ENCODE measurements at regions of chr9 and their contacts with region 1.

Region 1: DNA sequence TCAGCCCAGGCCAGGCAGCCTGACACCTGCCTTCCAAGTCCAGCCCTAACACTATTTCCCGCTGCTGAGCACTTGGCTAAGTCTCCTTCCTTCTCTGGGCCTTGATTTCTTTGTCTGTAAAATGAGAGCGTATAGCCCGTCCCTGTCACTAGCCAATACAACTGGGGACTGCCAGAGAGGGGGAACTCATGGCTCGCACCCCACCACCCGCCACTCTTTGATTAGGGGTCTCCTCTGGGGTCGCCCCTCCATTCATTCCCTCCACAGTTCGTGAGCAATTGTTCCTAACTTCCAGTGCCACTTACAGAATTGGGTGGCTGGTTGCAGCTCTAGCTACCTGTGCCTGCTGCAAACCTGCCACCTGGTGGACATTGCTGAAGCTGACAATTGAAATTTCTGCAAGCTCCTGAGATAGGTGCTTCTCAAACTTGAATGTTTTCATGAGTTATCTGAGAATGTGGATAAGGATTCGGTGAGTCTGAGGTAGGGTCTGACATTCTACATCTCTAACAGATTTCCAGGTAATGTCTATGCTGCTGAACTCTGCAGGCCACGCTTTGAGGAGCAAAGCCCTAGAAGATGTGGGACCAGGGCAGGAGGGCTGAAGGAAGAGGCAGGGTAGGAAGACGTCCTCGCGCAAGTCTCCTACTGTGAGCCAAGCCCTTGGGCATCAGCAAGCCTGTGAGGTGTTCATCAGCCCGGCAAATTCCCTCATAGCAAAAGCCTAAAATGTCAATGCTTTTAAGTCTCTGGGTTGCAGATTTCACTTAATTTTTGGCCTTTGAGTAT is 13.3 kb upstream of the RECK start:
- DNase-seq: peak; percentile 38
- H3K4me3 Mint-ChIP-seq: no peak overlapping the region
- H3K27ac Mint-ChIP-seq: no peak overlapping the region
- H3K4me1 Mint-ChIP-seq: no peaks in the 10 kb centered on the region
- H3K27me3 Mint-ChIP-seq: no peaks in the 10 kb centered on the region
- CTCF ChIP-seq: no peak

Region 2: GRCh38 chr9:35954942-35955546 is 68.4 kb before region 1 on chr9:
- CTCF ChIA-PET with region 1: interaction called, 7 read pairs
- intact Hi-C with region 1: loop called (anchors 1 kb)
- DNase-seq: peak; percentile 34
- H3K4me3 Mint-ChIP-seq: no peak overlapping the region
- H3K27ac Mint-ChIP-seq: no peak overlapping the region
- H3K4me1 Mint-ChIP-seq: no peaks in the 10 kb centered on the region
- H3K27me3 Mint-ChIP-seq: peaks cover 40% of the 10 kb centered on the region
- CTCF ChIP-seq: peak; percentile 58

Region 3: DNA sequence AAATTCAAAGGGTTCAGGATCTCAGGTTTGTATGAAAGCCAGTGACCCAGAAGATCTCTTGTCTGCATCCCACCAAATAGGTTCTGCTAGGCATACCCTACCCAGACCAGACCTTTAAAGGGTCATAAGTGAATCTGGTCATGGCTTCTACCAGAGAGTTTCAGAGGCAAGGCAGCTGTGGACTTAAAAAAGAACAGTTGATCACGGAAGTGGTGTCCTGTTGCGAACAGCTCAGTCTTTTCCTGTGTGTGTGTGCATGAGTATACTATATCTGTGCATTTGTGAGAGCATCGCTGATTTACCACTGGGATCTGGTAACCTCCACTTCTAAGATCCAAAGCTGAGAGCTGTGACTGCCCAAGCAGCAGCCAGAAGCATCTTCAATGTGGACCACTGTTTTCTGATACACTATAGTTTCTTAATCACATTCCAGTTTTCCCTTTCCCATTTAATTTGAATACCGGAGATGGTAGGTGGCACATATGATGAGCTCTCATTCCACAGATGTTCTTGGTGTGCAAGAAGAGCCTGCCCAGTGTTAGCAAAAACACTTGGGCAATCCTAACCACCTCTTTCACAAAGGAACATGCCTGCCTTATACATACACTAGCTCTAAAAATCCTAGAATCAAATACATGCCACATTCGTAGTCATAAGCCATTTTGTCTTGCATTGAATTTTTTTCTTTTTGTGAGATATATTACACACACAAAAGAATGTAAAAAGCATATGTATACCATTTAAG is 29.3 kb before region 1 on chr9:
- CTCF ChIA-PET with region 1: no interaction called
- intact Hi-C with region 1: loop called (anchors 2 kb)
- DNase-seq: no peak
- H3K4me3 Mint-ChIP-seq: no peak overlapping the region
- H3K27ac Mint-ChIP-seq: no peak overlapping the region
- H3K4me1 Mint-ChIP-seq: no peaks in the 10 kb centered on the region
- H3K27me3 Mint-ChIP-seq: peaks cover 20% of the 10 kb centered on the region
- CTCF ChIP-seq: no peak